ENCODE measurements at regions of chr5 and their contacts with region 1.

Region 1: DNA sequence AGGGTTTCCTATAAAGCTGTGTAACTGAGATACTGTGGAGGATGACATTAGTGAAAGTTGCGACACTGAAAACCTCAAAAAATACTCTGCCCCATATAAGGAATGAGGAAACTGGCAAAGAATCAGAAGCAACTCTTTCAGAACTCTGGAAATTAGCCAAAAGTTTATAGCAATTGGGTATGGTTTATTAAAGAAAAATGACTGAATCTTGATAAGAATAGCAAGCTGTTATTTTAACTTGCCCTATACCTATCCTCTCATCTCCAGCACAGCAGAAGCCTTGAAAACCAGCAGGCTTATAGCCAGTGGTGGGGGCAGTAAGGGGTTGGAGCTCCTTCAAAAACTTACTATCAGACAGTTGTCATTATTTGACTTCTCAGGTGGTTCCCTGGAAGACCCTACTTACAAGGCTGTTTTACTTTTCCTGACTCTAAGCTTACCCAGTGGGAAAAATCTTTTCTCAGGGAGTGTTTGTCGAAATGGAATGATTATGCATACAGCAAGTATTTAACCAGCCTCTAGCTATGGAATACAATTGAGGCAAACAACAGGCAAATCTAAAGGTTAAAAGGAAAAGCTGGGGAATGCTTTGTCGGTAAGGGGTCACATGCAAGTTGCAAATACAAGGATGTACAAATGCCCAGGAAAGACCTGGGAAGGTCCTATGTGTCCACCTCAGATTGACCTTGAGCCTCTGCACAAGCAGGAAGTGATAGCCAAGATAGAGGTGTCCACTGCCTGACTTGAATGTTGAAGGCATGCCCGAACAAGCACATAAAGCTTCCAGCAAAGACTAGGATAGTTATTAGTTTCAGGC is 21.0 kb upstream of the FAM151B start:
- DNase-seq: no peak
- H3K4me3 ChIP-seq: no peak overlapping the region
- CTCF ChIP-seq: no peak
- POLR2A ChIP-seq: no peak

Region 2: DNA sequence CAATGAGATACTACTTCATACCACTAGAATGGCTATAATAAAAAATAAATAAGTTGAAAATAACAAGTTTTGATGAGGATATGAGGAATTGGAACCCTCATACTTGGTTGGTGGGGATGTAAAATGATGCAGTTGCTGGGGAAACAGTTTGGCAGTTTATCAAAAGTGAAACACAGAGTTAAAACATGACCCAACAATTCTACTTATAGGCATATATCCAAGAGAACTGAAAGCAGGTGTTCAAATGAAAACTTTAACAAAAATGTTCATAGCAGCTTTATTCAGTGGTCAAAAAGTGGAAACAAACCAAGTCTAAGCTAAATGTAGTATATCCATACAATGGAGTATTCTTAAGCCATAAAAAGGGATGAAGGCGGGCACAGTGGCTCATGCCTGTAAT is 1805.2 kb before region 1 on chr5:
- intact Hi-C with region 1: no loop called
- DNase-seq: no peak
- H3K4me3 ChIP-seq: no peak overlapping the region
- CTCF ChIP-seq: no peak
- POLR2A ChIP-seq: no peak

Region 3: GRCh38 chr5:80761176-80761575 is 294.3 kb after region 1 on chr5:
- intact Hi-C with region 1: no loop called
- DNase-seq: no peak
- H3K4me3 ChIP-seq: no peak overlapping the region
- CTCF ChIP-seq: no peak
- POLR2A ChIP-seq: no peak

Region 4: DNA sequence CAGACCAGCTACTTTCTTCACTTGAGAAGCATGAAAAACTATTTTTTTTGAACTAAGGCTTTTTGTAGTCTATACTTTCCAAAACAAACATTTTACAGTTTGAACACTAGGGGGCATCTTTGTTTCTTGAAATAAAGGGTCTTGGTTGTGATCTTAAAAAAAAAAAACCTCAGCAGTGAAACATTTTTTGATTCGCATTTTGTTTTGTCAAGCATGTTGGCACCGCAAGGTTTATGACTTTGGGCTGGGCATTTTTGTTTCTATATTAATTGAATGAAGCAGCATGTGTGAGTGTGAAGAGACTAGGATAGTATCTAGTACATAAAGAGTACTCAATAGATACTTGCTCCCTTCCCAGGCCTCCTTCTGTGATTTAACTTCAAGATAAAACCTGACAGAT is 958.7 kb after region 1 on chr5:
- intact Hi-C with region 1: loop called (anchors 5 kb)
- DNase-seq: no peak
- H3K4me3 ChIP-seq: no peak overlapping the region
- CTCF ChIP-seq: no peak
- POLR2A ChIP-seq: no peak

Measured in lower leg skin (tissue), 4 donors.